Cardiac septum (tissue), 1 donor: ENCODE measurements at regions of chr7 and their contacts with region 1.

Region 1: DNA sequence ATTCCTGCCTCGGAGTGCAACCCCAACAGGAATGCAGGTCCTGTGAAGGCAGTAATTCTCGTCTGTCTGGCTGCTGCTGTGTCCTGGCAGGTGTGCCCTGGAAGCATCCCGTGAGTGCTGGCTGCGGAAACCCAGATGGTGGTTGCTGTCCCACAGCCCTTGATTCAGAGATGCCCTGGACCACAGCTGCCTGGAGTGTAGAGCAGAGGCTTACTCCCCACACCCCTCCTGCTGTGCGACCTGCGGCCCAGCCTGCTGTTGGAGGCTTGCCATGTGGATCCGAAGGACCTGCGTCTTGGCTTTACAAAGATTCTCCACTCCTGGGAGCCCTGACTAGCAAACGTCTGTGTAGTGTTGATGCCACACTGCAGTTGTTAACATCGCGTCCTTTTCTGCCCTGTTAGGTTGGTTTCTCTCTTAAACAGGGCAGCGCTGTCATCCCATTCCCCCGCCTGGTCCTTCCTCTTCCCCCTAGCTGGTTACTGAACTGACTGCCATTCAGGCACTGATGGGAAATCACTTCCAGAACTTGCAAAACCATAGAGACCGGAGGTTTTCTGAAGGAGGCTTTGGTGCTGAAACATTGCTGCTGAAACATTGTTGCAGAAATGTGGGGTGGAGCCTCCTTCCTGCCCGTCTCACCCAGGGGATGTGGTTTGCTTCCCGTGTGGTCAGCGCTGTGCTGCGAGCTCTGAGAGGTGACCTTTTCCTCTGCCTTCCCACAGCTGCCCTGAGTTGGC is 53.4 kb downstream of the DNAJB6 start:
- DNase-seq: peak; percentile 80

Region 2: DNA sequence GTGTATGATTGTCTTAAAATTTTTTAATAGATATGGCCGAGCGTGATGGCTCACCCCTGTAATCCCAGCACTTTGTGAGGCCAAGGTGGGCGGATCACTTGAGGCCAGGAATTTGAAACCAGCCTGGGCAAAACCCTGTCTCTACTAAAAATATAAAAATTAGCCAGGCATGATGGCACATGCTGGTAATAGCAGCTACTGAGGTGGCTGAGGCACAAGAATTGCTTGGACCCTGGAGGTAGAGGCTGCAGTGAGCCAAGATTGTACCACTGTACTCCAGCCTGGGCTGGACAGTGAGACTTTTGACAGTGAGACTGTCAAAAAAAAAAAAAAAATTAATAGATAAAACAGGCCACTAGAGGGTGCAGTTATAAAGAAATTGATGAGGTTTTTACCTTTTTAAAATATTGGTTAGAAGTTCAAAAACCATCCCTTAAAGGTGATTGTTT is 420.2 kb before region 1 on chr7:
- intact Hi-C with region 1: no loop called
- DNase-seq: no peak

Region 3: DNA sequence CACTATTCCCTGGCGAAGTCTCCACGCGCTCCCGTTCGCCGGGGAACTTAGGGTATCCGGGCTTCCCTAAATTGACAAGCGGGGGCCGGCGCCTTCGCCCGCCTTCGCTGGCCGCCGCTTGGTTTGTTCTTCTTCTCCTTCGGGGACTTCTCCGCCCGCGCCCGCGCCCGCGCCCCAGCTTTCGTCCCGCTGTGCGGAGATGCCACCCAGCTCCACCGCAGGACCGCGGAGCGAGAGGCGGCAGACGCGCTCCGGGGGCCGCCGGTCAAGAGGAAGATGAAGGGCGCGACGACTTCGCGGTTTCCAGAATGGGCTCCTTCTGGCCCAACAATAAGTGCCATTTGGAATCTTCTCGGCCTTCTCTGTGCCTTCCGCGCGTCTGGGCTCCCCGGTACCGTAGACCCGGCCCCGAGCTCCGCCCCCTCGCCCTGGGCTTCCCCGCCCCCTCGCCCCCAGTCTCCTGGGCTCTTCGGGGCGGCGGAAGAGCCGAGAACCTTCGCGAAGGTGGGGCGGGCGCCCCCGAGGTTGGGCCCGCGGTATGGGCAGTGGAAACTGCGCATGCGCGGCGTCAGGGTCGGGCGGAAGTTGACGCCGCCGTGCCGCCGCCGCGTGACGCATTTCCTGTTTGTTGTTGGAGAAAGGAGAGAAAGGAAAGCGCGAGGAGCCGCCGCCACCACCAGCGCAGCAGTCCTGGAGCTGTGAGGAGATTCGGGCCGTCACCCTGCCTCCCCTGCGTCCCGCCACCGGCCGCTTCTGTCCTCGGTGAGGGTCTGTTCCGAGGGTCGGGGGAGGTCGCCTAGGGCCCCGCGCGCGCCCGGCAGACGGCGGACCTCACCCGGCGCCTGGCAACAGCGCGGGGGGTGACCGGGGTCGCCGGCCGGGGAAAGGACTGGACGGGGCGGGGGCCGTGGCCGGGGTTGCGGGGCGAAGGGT is 53.5 kb before region 1 on chr7 and contains the start of gene DNAJB6:
- intact Hi-C with region 1: loop called (anchors 2 kb)
- DNase-seq: peak; percentile 97
- total RNA-seq, gene DNAJB6: 171 TPM

Region 4: DNA sequence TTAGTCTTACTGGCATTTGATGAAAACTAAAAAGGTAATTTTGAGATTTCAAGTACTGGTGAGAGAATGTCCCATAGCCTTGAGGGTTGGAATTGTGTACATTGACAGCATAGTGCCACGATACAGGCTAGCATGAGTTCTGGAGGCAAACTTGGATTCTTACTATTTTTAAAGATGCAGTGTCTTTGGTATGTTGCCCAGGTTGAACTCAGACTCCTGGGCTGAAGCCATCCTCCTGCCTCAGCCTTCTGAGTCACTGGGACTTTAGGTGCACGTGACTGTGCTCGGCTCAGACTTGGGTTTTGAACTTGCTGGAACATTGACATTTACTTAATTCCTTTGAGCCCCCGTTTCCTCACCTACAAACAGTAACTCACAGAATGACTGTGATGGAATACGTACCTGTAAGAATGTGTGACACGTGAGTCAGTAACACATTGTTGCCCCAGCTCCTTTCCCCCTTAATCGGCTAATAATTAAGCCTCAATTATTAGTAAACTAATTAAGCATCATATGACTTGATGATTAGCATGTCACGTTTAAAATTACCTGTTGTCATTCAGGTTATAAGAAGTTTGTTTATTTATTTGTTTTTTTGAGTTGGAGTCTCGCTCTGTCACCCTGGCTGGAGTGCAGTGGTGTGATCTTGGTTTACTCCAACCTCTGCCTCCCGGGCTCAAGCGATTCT is 42.8 kb before region 1 on chr7:
- intact Hi-C with region 1: no loop called
- DNase-seq: no peak

Region 5: GRCh38 chr7:157357129-157358040 is 32.8 kb before region 1 on chr7:
- intact Hi-C with region 1: loop called (anchors 5 kb)
- DNase-seq: no peak